ENCODE measurements at regions of chr3 and their contacts with region 1.

Region 1: GRCh38 chr3:141644931-141645330 is 93.2 kb upstream of the RNF7 start:
- DNase-seq: peak; percentile 79
- ATAC-seq: peak; percentile 89
- H3K4me3 Mint-ChIP-seq: no peak overlapping the region
- H3K27ac Mint-ChIP-seq: no peak overlapping the region
- H3K4me1 Mint-ChIP-seq: peaks cover 4% of the 10 kb centered on the region
- H3K27me3 Mint-ChIP-seq: no peaks in the 10 kb centered on the region

Region 2: DNA sequence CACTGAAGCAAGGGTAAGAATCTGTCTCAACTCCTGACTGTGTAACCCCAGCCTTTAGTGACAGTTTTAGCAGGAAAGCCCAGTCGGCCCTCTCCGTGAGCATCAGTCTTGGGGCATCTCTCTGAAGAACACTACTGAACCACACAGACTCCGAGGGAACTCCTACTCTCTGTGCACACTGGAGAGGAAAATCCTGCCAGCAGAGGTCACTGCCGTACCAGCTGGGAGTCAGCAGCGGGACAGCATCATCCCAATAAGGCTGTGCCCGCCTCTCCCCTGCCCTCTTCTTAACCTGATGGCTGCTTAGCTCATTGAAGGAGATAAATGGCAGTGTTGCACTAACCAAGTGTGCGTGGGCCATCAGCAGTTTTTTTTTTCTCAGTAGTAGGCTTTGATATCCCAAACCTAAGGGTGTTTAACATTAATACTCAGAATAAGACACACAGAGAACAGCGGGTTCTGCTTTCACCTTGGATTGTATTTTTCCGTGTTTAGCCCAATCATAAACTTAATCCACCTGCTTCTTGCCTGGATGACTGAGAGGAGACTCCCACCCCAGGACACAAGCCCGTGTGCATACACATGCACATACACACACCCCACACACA is 184.7 kb before region 1 on chr3:
- CTCF ChIA-PET with region 1: interaction called, 31 read pairs
- DNase-seq: peak; percentile 93
- ATAC-seq: peak; percentile 99
- H3K4me3 Mint-ChIP-seq: no peak overlapping the region
- H3K27ac Mint-ChIP-seq: no peak overlapping the region
- H3K4me1 Mint-ChIP-seq: peaks cover 20% of the 10 kb centered on the region
- H3K27me3 Mint-ChIP-seq: no peaks in the 10 kb centered on the region

Region 3: GRCh38 chr3:141556034-141556433 is 88.9 kb before region 1 on chr3:
- CTCF ChIA-PET with region 1: no interaction called
- DNase-seq: no peak
- ATAC-seq: peak; percentile 18
- H3K4me3 Mint-ChIP-seq: no peak overlapping the region
- H3K27ac Mint-ChIP-seq: no peak overlapping the region
- H3K4me1 Mint-ChIP-seq: peaks cover 41% of the 10 kb centered on the region
- H3K27me3 Mint-ChIP-seq: no peaks in the 10 kb centered on the region